Endothelial cell of umbilical vein (primary cell): ENCODE measurements at regions of chr20 and their contacts with region 1.

Region 1: GRCh38 chr20:48295445-48295963 is 510.2 kb upstream of the SULF2 start:
- DNase-seq: peak; percentile 95
- H3K4me3 ChIP-seq: no peak overlapping the region
- H3K27ac ChIP-seq: peak overlapping the region; percentile 93
- H3K4me1 ChIP-seq: peaks cover 47% of the 10 kb centered on the region
- H3K27me3 ChIP-seq: no peaks in the 10 kb centered on the region
- CTCF ChIP-seq: peak; percentile 22 to 36
- POLR2A ChIP-seq: no peak

Region 2: DNA sequence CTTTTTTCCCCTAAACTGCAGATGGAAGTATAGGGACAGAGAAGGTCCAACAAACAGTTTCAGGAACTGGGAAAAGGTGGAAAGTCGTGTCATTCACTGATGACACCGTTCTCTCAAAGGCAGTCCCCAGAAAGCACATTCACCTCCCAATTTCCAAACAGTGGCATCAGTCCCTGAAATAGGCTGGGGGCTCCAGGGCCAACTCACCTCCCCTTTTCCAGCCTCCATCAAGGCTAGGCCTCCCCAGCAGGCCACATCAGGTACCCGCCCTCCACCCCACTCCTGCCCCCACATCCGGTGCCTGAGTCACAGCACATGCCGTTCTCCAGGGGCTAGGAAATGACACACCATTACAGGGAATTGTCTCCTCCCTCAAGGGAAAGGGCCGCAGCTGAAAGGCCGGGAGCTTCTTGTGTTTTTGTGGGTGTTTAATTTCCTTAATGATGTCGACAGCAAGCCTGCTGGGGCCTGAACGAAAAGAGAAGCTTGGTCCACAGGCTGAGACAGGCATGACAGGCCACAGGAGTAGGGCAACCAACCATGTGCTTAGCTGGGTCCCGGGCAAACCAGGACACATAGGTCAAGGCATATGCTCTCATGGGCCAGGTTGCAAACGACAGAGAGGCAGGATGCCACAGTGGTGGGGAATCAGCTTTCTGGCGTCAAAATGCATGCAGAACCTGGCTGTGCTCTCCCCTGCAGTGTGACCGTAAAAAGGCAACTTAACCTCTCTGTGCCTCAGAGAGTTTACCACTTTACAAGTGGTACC is 978.2 kb before region 1 on chr20:
- CTCF ChIA-PET with region 1: no interaction called
- POLR2A ChIA-PET with region 1: no interaction called
- dilution Hi-C with region 1: no loop called
- intact Hi-C with region 1: loop called (anchors 5 kb)
- DNase-seq: peak; percentile 97
- H3K4me3 ChIP-seq: peak overlapping the region in 1 of 3 experiments; percentile 15
- H3K27ac ChIP-seq: peak overlapping the region; percentile 86
- H3K4me1 ChIP-seq: peaks cover 67% of the 10 kb centered on the region
- H3K27me3 ChIP-seq: no peaks in the 10 kb centered on the region
- CTCF ChIP-seq: no peak
- POLR2A ChIP-seq: peak; percentile 90

Region 3: DNA sequence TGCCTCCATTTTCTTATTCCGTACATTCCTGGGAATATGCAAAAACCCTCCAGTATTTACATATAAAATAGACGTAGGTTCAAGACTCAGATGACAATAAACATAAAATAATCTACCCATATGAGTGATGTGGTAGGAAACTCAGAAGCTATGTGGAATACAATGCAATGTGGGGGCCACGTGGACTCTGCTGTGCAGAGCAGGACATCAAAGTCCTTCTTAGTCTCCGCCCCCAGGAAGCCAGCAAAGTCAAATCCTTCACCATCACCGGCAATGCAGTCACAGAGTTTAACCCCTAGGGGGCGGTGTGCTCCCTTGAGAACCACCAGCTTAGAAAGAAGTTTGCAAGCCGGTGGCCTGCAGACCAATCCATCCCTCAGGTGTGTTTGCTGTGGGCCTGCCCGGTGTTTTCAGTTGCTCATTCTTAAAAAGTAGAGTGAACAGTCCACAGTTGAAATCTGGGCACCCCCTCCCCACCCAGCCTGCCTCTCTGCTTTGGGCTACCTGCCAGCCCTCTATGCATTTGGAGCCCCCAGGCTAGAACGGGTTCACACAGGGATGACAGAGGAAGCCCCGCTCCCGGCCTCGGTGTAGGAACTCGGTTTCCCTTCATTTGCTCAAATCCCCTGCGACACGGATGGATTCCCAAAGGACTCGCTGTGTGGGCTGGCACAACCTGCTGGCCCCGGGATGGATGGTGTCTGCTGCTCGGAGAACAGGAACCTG is 570.1 kb before region 1 on chr20:
- CTCF ChIA-PET with region 1: interaction called, 12 read pairs
- POLR2A ChIA-PET with region 1: no interaction called
- dilution Hi-C with region 1: no loop called
- intact Hi-C with region 1: loop called (anchors 1 kb)
- DNase-seq: peak; percentile 90
- H3K4me3 ChIP-seq: no peak overlapping the region
- H3K27ac ChIP-seq: no peak overlapping the region
- H3K4me1 ChIP-seq: no peaks in the 10 kb centered on the region
- H3K27me3 ChIP-seq: no peaks in the 10 kb centered on the region
- CTCF ChIP-seq: peak; percentile 90 to 91
- POLR2A ChIP-seq: no peak

Region 4: DNA sequence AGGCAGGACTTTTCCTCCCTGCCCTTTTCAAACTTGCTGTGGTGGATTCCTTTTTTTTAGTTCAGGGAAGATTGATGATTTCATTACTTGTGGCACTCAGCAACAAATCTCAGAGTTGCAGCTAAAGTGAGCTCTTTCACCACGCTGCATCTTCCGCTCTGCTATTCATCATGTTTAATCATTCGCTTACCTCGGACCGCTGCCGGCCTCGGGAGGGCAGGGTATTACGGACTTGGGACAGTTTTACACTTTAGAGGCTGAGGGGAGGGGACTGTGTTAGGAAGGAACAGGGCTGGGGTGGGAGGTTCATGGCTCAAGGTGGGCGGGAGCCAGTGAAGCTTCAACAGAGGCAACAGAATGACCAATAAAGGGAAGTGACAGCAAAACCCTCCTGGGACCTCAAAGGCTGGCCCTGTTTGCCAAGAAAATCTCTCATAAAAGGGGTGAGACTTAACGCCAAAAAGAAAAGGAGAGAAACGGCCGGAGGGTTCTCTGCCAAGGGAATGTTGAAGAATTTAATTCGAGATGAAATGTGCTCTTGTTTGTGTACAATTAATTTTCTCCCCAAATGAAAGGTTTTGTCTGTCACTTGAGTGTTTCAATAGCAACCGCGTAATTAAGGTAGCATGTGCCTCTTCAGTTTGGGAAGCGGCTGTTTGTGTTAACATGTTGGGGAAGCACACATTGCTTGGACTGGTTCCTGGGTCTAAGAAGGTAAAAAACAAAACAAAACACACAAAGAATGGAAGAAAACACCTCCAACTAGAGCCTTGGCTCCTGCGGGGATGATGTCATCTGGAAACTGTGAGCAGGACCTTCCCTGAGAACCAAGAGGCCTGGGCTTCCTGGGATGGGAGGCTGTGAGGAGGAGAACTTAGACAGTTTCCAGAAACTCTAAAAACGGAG is 437.7 kb before region 1 on chr20:
- CTCF ChIA-PET with region 1: interaction called, 3 read pairs
- POLR2A ChIA-PET with region 1: interaction called, 3 read pairs
- dilution Hi-C with region 1: no loop called
- intact Hi-C with region 1: loop called (anchors 1 kb)
- DNase-seq: peak; percentile 38
- H3K4me3 ChIP-seq: no peak overlapping the region
- H3K27ac ChIP-seq: no peak overlapping the region
- H3K4me1 ChIP-seq: no peaks in the 10 kb centered on the region
- H3K27me3 ChIP-seq: peaks cover 0 to 9% of the 10 kb centered on the region in 2 experiments
- CTCF ChIP-seq: no peak
- POLR2A ChIP-seq: no peak

Region 5: GRCh38 chr20:47973519-47974233 is 321.8 kb before region 1 on chr20:
- CTCF ChIA-PET with region 1: interaction called, 4 read pairs
- POLR2A ChIA-PET with region 1: no interaction called
- dilution Hi-C with region 1: no loop called
- intact Hi-C with region 1: loop called (anchors 5 kb)
- DNase-seq: peak; percentile 50
- H3K4me3 ChIP-seq: no peak overlapping the region
- H3K27ac ChIP-seq: peak overlapping the region; percentile 34
- H3K4me1 ChIP-seq: peaks cover 21% of the 10 kb centered on the region
- H3K27me3 ChIP-seq: no peaks in the 10 kb centered on the region
- CTCF ChIP-seq: no peak
- POLR2A ChIP-seq: no peak

Region 6: GRCh38 chr20:48310305-48310704 is 14.8 kb after region 1 on chr20:
- CTCF ChIA-PET with region 1: no interaction called
- POLR2A ChIA-PET with region 1: no interaction called
- dilution Hi-C with region 1: no loop called
- intact Hi-C with region 1: no loop called
- DNase-seq: no peak
- H3K4me3 ChIP-seq: no peak overlapping the region
- H3K27ac ChIP-seq: no peak overlapping the region
- H3K4me1 ChIP-seq: no peaks in the 10 kb centered on the region
- H3K27me3 ChIP-seq: peaks cover 6 to 8% of the 10 kb centered on the region in 2 experiments
- CTCF ChIP-seq: no peak
- POLR2A ChIP-seq: no peak

Region 7: GRCh38 chr20:48374991-48375595 is 79.6 kb after region 1 on chr20:
- CTCF ChIA-PET with region 1: no interaction called
- POLR2A ChIA-PET with region 1: no interaction called
- dilution Hi-C with region 1: no loop called
- intact Hi-C with region 1: loop called (anchors 1 kb)
- DNase-seq: no peak
- H3K4me3 ChIP-seq: no peak overlapping the region
- H3K27ac ChIP-seq: peak overlapping the region; percentile 41
- H3K4me1 ChIP-seq: peaks cover 11% of the 10 kb centered on the region
- H3K27me3 ChIP-seq: peaks cover 0 to 2% of the 10 kb centered on the region in 2 experiments
- CTCF ChIP-seq: no peak
- POLR2A ChIP-seq: no peak